GM12878 (cell line): ENCODE measurements at regions of chr3 and their contacts with region 1.

Region 1: DNA sequence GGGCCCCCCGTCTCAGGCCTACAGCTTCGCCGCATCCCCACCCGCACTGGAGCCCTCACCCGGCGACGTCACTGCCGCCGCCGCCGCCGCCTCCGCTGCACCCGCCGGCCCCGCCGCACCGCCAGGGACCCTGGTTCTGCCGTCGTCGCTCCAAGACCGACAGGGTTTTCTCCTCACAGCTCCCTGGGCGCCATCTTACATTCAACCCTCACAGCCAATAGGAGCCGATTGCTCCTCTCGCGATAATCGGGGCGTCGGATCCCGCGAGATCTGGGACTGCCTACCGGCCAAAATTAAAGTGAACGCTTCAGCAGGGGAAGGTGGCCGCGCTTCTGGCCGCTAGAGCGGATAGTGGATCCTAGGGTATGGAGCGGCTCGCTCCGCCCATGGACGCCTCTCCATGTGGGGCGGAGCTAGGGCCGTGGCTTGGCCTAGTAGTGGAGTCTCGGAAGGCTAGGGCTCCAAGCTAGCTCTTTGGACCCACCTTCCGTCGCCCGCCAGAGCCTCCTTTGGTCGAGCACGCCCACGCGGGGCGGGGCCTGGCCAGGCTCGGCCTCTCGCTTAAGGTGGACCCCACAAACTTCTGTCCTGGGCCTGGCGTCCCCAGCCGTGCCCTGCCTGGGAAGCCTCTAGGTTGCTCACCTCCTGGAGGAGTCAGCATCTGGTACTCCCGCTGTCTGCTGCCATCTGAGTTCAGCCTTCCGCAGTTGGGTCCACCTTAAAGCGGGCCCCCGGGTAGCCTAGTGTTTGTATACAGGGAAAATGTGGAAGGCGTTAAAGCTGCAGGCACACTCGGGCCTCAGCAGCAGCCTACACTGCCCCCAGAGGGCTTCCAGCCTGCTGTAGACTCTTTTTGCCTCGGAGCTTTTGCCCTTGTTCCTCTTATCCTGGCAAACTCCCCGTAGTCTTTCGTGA is at the start of gene QRICH1:
- DNase-seq: peak; percentile 90
- ATAC-seq: peak; percentile 92
- H3K4me3 ChIP-seq: peak within 1 kb of the TSS; percentile 96
- H3K27ac ChIP-seq: peak within 1 kb of the TSS; percentile 91
- H3K4me1 ChIP-seq: peaks cover 11% of the 10 kb centered on the region
- H3K27me3 ChIP-seq: no peaks in the 10 kb centered on the region
- CTCF ChIP-seq: peak; percentile 54 to 73 (median 65)
- EP300 ChIP-seq: no peak
- POLR2A ChIP-seq: peak; percentile 87
- RAD21 ChIP-seq: peak; percentile 47
- polyA plus RNA-seq, gene QRICH1: 22.2 to 23.3 TPM

Region 2: GRCh38 chr3:49007068-49007770 is 86.9 kb before region 1 on chr3 and contains the start of gene WDR6:
- CTCF ChIA-PET with region 1: interaction called, 10 read pairs
- POLR2A ChIA-PET with region 1: interaction called, 18 read pairs
- RAD21 ChIA-PET with region 1: interaction called, 20 read pairs
- SMC1A ChIA-PET with region 1: interaction called, 8 read pairs
- in situ Hi-C with region 1: no loop called
- intact Hi-C with region 1: no loop called
- DNase-seq: peak; percentile 96
- ATAC-seq: peak; percentile 94
- H3K4me3 ChIP-seq: peak within 1 kb of the TSS; percentile 83
- H3K27ac ChIP-seq: peak within 1 kb of the TSS; percentile 89
- H3K4me1 ChIP-seq: peaks cover 16% of the 10 kb centered on the region
- H3K27me3 ChIP-seq: no peaks in the 10 kb centered on the region
- CTCF ChIP-seq: peak; percentile 41 to 48 (median 47); a peak in 5 of 6 replicates
- EP300 ChIP-seq: peak in 1 of 2 experiments; percentile 35; a peak in 1 of 4 replicates
- POLR2A ChIP-seq: peak; percentile 99
- RAD21 ChIP-seq: no peak
- polyA plus RNA-seq, gene WDR6: 21.3 to 24.1 TPM

Region 3: GRCh38 chr3:49021813-49022687 is 72.1 kb before region 1 on chr3 and contains the start of gene NDUFAF3:
- CTCF ChIA-PET with region 1: interaction called, 13 read pairs
- POLR2A ChIA-PET with region 1: interaction called, 26 read pairs
- RAD21 ChIA-PET with region 1: interaction called, 22 read pairs
- SMC1A ChIA-PET with region 1: interaction called, 5 read pairs
- in situ Hi-C with region 1: no loop called
- intact Hi-C with region 1: loop called (anchors 2 kb)
- DNase-seq: peak; percentile 74
- ATAC-seq: peak; percentile 81
- H3K4me3 ChIP-seq: peak within 1 kb of the TSS; percentile 95
- H3K27ac ChIP-seq: peak within 1 kb of the TSS; percentile 94
- H3K4me1 ChIP-seq: peaks cover 21% of the 10 kb centered on the region
- H3K27me3 ChIP-seq: no peaks in the 10 kb centered on the region
- CTCF ChIP-seq: peak; percentile 95 to 97 (median 95)
- EP300 ChIP-seq: peak in 1 of 2 experiments; percentile 25; a peak in 1 of 4 replicates
- POLR2A ChIP-seq: no peak
- RAD21 ChIP-seq: 0 out of 2 replicates have a peak, but pooled peaks have one; percentile 14
- polyA plus RNA-seq, gene NDUFAF3: 31.3 to 40.2 TPM

Region 4: DNA sequence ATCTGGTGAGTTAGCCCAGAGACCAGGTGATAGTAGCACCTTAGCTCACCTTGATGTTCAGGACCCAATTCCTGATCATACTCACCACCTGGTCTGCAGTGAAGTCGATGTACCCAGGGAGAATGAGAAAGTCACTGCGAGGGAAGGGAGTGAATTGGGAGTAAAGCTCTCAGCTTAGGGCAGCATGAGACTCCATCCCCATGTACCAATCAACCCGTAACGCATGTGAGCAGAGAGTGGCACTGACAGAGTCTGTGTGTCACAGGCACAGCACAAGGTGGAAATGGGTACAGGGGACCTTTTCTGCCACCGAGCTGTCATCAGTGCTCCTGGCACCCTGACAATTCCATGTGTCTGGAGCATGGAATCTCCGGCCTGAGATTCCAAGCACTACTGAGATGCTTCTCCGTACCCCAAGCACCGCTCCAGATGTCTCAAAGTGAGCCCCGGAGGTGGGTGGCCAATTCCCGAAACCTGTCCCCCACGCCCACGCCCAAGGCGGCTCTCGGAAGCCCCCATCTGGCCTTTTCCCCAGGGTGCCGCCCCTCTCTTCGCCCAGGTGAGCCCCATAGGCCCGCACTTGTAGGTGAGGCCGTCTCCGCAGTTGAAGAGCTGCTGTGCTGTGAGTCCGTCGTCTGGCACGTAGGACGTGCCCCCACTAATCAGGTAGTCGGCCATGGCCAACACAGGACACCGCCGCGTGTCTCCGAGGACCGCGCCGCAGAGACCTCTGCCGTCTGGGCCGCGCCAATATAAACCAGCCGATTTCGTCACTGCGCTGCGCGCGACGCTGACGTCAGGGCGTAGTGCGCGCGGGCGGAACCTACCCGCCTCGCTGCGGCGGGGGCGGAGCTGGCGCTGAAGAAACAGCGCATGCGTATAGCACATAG is 65.2 kb before region 1 on chr3 and contains the start of gene IMPDH2:
- CTCF ChIA-PET with region 1: interaction called, 3 read pairs
- POLR2A ChIA-PET with region 1: interaction called, 9 read pairs
- RAD21 ChIA-PET with region 1: interaction called, 6 read pairs
- SMC1A ChIA-PET with region 1: no interaction called
- in situ Hi-C with region 1: no loop called
- intact Hi-C with region 1: loop called (anchors 2 kb)
- DNase-seq: peak; percentile 79
- ATAC-seq: peak; percentile 92
- H3K4me3 ChIP-seq: peak within 1 kb of the TSS; percentile 79
- H3K27ac ChIP-seq: peak within 1 kb of the TSS; percentile 76
- H3K4me1 ChIP-seq: peaks cover 13% of the 10 kb centered on the region
- H3K27me3 ChIP-seq: no peaks in the 10 kb centered on the region
- CTCF ChIP-seq: peak in 2 of 3 experiments; percentile 9 to 29; a peak in 1 of 6 replicates
- EP300 ChIP-seq: no peak
- POLR2A ChIP-seq: no peak
- RAD21 ChIP-seq: no peak
- polyA plus RNA-seq, gene IMPDH2: 386 to 424 TPM

Region 5: DNA sequence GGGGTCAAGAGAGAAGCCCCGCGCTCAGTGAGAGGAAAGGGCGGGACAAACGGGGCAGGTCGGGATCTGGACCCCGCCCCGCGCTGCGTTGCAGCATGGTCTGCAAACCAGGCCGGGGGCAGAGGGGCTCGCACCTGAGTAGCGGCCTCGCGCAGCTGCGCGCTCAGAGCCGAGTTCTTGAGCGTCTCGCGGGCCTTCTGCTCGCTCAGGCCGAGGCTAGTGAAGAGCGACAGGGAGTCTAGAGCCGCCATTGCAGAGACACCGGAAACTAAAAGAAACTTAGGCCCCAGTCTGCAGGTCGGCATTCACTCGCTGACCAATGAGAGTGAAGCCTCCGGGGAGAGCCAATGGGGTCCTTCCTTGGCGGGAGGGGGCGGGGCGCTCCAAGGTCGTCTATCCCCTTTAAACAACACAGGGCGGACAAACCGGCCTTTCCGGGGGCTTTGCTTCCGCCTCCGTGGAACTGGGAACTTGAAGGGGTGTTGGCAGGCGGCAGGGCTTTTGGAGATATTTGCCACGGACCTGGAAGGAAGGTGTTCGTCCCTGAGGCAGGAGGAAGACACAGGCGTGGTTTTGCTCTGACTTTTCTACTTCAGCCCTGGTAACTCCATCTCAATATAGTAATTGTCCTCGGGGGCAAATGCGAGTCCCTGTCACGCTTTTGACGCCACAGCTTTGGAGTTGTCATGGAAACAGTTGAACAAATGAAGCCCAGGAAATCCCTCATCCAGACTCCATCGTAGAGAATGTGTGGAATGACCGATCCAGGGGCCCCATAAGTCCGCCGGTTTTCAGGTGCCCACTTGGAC is 10.6 kb after region 1 on chr3 and contains the start of gene QARS1:
- CTCF ChIA-PET with region 1: interaction called, 19 read pairs
- POLR2A ChIA-PET with region 1: interaction called, 29 read pairs
- RAD21 ChIA-PET with region 1: interaction called, 6 read pairs
- SMC1A ChIA-PET with region 1: interaction called, 5 read pairs
- in situ Hi-C with region 1: no loop called
- intact Hi-C with region 1: no loop called
- DNase-seq: peak; percentile 69
- ATAC-seq: peak; percentile 100
- H3K4me3 ChIP-seq: peak within 1 kb of the TSS; percentile 100
- H3K27ac ChIP-seq: peak within 1 kb of the TSS; percentile 92
- H3K4me1 ChIP-seq: peaks cover 11% of the 10 kb centered on the region
- H3K27me3 ChIP-seq: no peaks in the 10 kb centered on the region
- CTCF ChIP-seq: no peak
- EP300 ChIP-seq: no peak
- POLR2A ChIP-seq: peak; percentile 91
- RAD21 ChIP-seq: no peak
- polyA plus RNA-seq, gene QARS1: 229 to 328 TPM

Region 6: GRCh38 chr3:49120438-49121131 is 26.5 kb after region 1 on chr3 and contains the start of gene USP19:
- CTCF ChIA-PET with region 1: interaction called, 12 read pairs
- POLR2A ChIA-PET with region 1: interaction called, 15 read pairs
- RAD21 ChIA-PET with region 1: interaction called, 16 read pairs
- SMC1A ChIA-PET with region 1: interaction called, 14 read pairs
- in situ Hi-C with region 1: no loop called
- intact Hi-C with region 1: no loop called
- DNase-seq: peak; percentile 71
- ATAC-seq: peak; percentile 94
- H3K4me3 ChIP-seq: peak within 1 kb of the TSS; percentile 100
- H3K27ac ChIP-seq: peak within 1 kb of the TSS; percentile 79
- H3K4me1 ChIP-seq: peaks cover 10% of the 10 kb centered on the region
- H3K27me3 ChIP-seq: no peaks in the 10 kb centered on the region
- CTCF ChIP-seq: no peak
- EP300 ChIP-seq: no peak
- POLR2A ChIP-seq: peak; percentile 97
- RAD21 ChIP-seq: no peak
- polyA plus RNA-seq, gene USP19: 0.24 to 0.68 TPM

Region 7: GRCh38 chr3:49411968-49412631 is 318.0 kb after region 1 on chr3 and contains the starts of genes RHOA and TCTA:
- CTCF ChIA-PET with region 1: no interaction called
- POLR2A ChIA-PET with region 1: no interaction called
- RAD21 ChIA-PET with region 1: interaction called, 3 read pairs
- SMC1A ChIA-PET with region 1: no interaction called
- in situ Hi-C with region 1: no loop called
- intact Hi-C with region 1: loop called (anchors 10 kb)
- DNase-seq: peak; percentile 99
- ATAC-seq: peak; percentile 88
- H3K4me3 ChIP-seq: peak within 1 kb of the TSS; percentile 93
- H3K27ac ChIP-seq: peak within 1 kb of the TSS; percentile 96
- H3K4me1 ChIP-seq: peaks cover 31% of the 10 kb centered on the region
- H3K27me3 ChIP-seq: no peaks in the 10 kb centered on the region
- CTCF ChIP-seq: no peak
- EP300 ChIP-seq: no peak
- POLR2A ChIP-seq: peak; percentile 96
- RAD21 ChIP-seq: no peak
- polyA plus RNA-seq, gene RHOA: 696 to 1,049 TPM
- polyA plus RNA-seq, gene TCTA: 6.5 to 7.1 TPM

Region 8: GRCh38 chr3:49553692-49554632 is 459.9 kb after region 1 on chr3 and contains the start of gene BSN:
- CTCF ChIA-PET with region 1: no interaction called
- POLR2A ChIA-PET with region 1: no interaction called
- RAD21 ChIA-PET with region 1: no interaction called
- SMC1A ChIA-PET with region 1: no interaction called
- in situ Hi-C with region 1: no loop called
- intact Hi-C with region 1: no loop called
- DNase-seq: peak; percentile 42
- ATAC-seq: peak; percentile 96
- H3K4me3 ChIP-seq: peak within 1 kb of the TSS; percentile 59
- H3K27ac ChIP-seq: no peak within 1 kb of the TSS
- H3K4me1 ChIP-seq: peaks cover 5% of the 10 kb centered on the region
- H3K27me3 ChIP-seq: peaks cover 4 to 9% of the 10 kb centered on the region in 2 experiments
- CTCF ChIP-seq: no peak
- EP300 ChIP-seq: no peak
- POLR2A ChIP-seq: no peak
- RAD21 ChIP-seq: no peak
- polyA plus RNA-seq, gene BSN: under 0.01 TPM in 1 of 2 experiments, not detected in the other

Region 9: DNA sequence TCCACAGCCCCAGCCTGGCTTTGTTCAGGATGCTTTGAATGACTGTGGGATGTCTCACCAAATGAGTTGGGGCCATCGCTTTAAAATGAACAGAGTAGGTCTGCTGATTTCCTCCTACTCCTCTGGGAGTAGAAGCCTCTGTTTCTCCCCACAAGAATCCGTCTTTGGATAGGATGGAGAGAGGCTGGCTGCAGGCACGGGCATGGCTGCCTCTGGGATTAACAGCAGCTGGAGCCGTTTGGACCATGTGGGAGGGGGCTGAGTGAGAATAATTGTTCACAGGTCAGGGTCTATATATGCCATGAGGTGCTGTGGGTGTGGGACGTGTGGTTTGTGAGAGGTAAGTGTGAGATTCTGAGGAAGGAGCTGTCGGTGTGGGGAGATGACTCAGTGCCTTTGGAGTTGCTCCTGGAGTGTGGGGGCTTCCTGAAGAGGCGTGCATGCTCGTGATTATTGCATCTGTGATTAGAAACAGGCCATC is 532.0 kb after region 1 on chr3:
- CTCF ChIA-PET with region 1: no interaction called
- POLR2A ChIA-PET with region 1: no interaction called
- RAD21 ChIA-PET with region 1: no interaction called
- SMC1A ChIA-PET with region 1: no interaction called
- in situ Hi-C with region 1: no loop called
- intact Hi-C with region 1: no loop called
- DNase-seq: no peak
- ATAC-seq: no peak
- H3K4me3 ChIP-seq: no peak overlapping the region
- H3K27ac ChIP-seq: no peak overlapping the region
- H3K4me1 ChIP-seq: no peaks in the 10 kb centered on the region
- H3K27me3 ChIP-seq: no peaks in the 10 kb centered on the region; a peak in 1 of 4 replicates
- CTCF ChIP-seq: no peak
- EP300 ChIP-seq: no peak
- POLR2A ChIP-seq: no peak
- RAD21 ChIP-seq: no peak